Common myeloid progenitor, CD34-positive (primary cell): ENCODE measurements at regions of chr9 and their contacts with region 1.

Region 1: GRCh38 chr9:133060417-133060841 is 1.4 kb upstream of the CEL start:
- DNase-seq: peak; percentile 31 to 78 (median 68)
- H3K4me3 ChIP-seq: peak overlapping the region in 4 of 7 experiments; percentile 11 to 57 (median 32)
- H3K27ac ChIP-seq: peak overlapping the region in 1 of 2 experiments; percentile 77
- H3K4me1 ChIP-seq: peaks cover 5 to 76% (median 70%) of the 10 kb centered on the region in 4 experiments
- H3K27me3 ChIP-seq: no peaks in the 10 kb centered on the region

Region 2: DNA sequence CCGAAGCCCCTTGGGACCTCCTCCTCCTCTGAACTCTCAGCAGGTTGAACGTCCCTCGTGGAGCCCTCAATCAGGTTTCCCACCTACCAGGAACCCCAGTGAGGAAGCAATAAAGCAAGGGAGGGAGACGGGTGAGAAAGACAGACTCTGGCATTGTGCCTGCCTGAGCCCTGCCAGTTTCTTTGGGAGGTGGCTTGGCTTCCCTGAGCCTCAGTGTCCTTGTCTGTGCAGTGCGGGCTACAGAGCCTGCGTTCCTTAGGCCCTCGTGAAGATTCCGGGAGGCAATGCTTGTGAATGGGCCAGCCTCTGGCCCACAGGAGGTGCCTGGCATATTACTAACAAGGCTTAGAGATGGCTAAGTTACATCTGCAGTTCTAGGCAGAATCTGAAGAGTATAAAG is 17.8 kb before region 1 on chr9:
- CTCF ChIA-PET with region 1: interaction called, 15 read pairs
- POLR2A ChIA-PET with region 1: interaction called, 4 read pairs
- DNase-seq: no peak
- H3K4me3 ChIP-seq: no peak overlapping the region
- H3K27ac ChIP-seq: no peak overlapping the region
- H3K4me1 ChIP-seq: no peaks in the 10 kb centered on the region
- H3K27me3 ChIP-seq: no peaks in the 10 kb centered on the region

Region 3: GRCh38 chr9:133048569-133048968 is 11.9 kb before region 1 on chr9:
- CTCF ChIA-PET with region 1: interaction called, 15 read pairs
- POLR2A ChIA-PET with region 1: interaction called, 4 read pairs
- DNase-seq: peak; percentile 57 to 77 (median 76)
- H3K4me3 ChIP-seq: no peak overlapping the region
- H3K27ac ChIP-seq: no peak overlapping the region
- H3K4me1 ChIP-seq: peaks cover 0 to 4% (median 2%) of the 10 kb centered on the region in 4 experiments
- H3K27me3 ChIP-seq: no peaks in the 10 kb centered on the region